ENCODE measurements at regions of chr11 and their contacts with region 1.

Region 1: DNA sequence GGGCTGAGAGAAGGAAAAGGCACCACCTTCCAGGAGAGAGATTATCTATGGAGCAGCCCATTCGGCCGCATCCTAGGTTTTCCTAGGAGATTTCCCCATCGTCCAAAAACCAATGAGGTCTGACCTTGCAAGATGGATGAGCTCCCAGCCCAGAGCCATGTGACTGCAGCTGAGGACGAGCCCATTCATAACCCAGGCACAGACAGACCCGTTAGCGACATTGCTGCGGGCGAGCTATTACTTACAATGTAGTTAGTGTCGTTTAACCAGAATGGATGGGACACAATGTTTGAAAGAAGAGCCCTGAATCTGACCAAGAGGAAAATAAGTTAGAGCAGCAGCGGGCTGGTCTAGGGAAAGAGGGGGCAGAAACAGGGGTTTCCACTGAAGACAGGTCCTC is 395.9 kb upstream of the CADM1 start:
- DNase-seq: no peak
- H3K4me3 Mint-ChIP-seq: no peak overlapping the region
- H3K27ac Mint-ChIP-seq: no peak overlapping the region
- H3K4me1 Mint-ChIP-seq: no peaks in the 10 kb centered on the region
- H3K27me3 Mint-ChIP-seq: no peaks in the 10 kb centered on the region
- CTCF ChIP-seq: no peak

Region 2: DNA sequence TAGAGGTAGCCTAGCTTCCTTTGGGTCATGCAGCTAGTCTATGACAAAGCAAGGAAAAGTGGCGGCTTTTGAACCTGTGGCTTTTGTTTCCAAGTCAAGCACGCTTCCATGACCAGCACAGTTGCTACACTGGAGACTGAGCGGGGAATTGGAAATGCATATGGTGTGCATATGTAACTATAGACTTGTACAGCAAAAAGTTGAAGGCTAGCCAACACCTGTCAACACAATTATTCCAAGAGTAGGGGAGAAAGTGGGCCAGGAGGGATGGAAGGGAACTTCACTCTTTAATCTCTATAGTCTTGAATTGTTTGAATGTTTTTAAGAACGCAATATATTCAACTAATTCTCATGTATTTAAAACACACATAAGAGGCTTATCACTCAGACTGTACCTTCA is 177.4 kb before region 1 on chr11:
- CTCF ChIA-PET with region 1: no interaction called
- intact Hi-C with region 1: loop called (anchors 2 kb)
- DNase-seq: no peak
- H3K4me3 Mint-ChIP-seq: no peak overlapping the region
- H3K27ac Mint-ChIP-seq: no peak overlapping the region
- H3K4me1 Mint-ChIP-seq: no peaks in the 10 kb centered on the region
- H3K27me3 Mint-ChIP-seq: no peaks in the 10 kb centered on the region
- CTCF ChIP-seq: no peak

Region 3: DNA sequence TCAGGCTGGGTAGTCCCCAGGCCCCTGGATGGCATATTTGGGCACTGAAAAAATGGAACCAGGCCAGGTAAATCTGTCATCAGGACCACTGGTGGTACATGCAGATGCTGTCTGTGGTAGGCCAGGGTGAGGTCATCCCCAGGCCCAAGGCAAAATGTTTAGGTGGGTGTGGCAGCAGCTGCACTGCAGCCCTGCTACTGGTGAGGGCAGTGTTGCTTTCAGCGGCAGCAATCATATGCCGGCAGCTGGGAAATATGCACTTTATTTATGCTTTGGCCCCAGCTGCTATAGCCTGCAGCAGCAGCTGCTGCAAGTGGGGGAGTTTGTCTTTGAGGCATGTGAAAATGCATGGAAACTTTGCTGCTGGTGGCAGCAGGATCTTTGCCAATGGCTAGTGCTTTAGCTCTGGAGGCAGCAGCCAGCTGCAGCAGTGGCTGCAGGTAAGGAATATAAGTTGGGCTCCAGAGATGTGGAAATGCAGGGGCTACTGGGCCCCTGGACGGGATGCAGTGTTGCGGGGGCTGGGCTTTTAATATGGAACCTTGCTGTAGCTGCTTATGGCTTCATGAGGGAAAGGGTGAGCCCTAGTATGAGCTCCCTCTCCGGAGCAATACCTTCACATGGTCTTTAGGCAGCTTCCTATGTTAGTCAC is 30.2 kb before region 1 on chr11:
- CTCF ChIA-PET with region 1: no interaction called
- intact Hi-C with region 1: no loop called
- DNase-seq: no peak
- H3K4me3 Mint-ChIP-seq: no peak overlapping the region
- H3K27ac Mint-ChIP-seq: no peak overlapping the region
- H3K4me1 Mint-ChIP-seq: no peaks in the 10 kb centered on the region
- H3K27me3 Mint-ChIP-seq: no peaks in the 10 kb centered on the region
- CTCF ChIP-seq: no peak